ENCODE measurements at regions of chr9 and their contacts with region 1.

Region 1: GRCh38 chr9:71830929-71831328 is 62.6 kb upstream of the CEMIP2 start:
- DNase-seq: no peak
- ATAC-seq: no peak
- H3K4me3 ChIP-seq: no peak overlapping the region
- H3K27ac ChIP-seq: no peak overlapping the region
- H3K4me1 ChIP-seq: no peaks in the 10 kb centered on the region
- H3K27me3 ChIP-seq: no peaks in the 10 kb centered on the region
- CTCF ChIP-seq: no peak
- EP300 ChIP-seq: no peak
- POLR2A ChIP-seq: no peak
- RAD21 ChIP-seq: no peak

Region 2: DNA sequence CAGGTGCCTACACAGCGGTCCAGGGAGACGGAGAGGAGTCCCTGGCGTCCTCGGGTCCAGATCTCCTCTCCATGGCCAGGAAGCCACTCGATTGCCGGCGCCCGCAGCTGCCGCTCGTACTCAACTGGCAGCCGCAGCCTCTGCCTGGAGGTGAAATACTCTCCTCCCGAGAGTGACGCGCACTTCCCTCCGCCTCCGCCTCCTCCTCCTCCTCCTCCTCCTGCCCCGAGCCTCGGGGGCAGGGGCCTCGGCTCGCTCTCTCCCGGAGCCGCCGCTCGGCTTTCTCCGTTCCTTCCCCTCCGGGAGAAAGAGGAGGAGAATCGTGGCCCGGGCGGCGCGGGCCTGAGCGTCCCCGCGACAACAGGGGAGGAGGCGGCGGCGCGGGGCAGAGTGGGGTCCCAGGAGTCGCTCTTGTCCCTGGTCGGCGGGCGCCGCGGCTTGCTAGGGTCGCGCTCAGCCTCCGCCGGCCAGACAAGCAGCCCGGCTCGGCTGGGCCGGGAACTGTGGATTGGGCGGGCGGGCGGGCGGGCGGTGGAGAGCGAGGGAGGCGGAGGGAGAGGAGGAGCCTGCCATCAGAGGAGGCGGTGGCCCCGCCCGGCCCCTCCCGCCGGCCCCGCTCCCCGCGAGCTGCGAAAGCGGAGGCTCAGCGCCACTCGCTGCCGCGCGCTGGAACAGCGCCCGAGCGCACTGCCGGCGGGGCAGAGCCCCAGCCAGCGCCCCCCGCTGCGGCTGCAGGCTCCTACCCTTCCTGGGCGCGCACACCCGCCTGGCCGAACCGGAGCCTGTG is 62.3 kb before region 1 on chr9 and contains the start of gene CEMIP2:
- CTCF ChIA-PET with region 1: no interaction called
- POLR2A ChIA-PET with region 1: no interaction called
- in situ Hi-C with region 1: no loop called
- intact Hi-C with region 1: no loop called
- DNase-seq: peak; percentile 71
- ATAC-seq: peak; percentile 87
- H3K4me3 ChIP-seq: peak within 1 kb of the TSS; percentile 90 to 99 (median 98)
- H3K27ac ChIP-seq: peak within 1 kb of the TSS; percentile 92
- H3K4me1 ChIP-seq: peaks cover 31% of the 10 kb centered on the region
- H3K27me3 ChIP-seq: peaks cover 0 to 12% of the 10 kb centered on the region in 2 experiments; a peak in 1 of 5 replicates
- CTCF ChIP-seq: peak; percentile 73
- EP300 ChIP-seq: no peak; a peak in 1 of 4 replicates
- POLR2A ChIP-seq: peak; percentile 97 to 98
- RAD21 ChIP-seq: peak; percentile 94
- total RNA-seq, gene CEMIP2: 52.7 and 94.3 TPM in 2 replicates

Region 3: GRCh38 chr9:71876106-71876505 is 45.2 kb after region 1 on chr9:
- CTCF ChIA-PET with region 1: no interaction called
- POLR2A ChIA-PET with region 1: no interaction called
- in situ Hi-C with region 1: no loop called
- intact Hi-C with region 1: loop called (anchors 1 kb)
- DNase-seq: peak; percentile 11
- ATAC-seq: peak; percentile 51; the same call in 2 of the 3 replicates
- H3K4me3 ChIP-seq: no peak overlapping the region
- H3K27ac ChIP-seq: no peak overlapping the region
- H3K4me1 ChIP-seq: peaks cover 40% of the 10 kb centered on the region
- H3K27me3 ChIP-seq: no peaks in the 10 kb centered on the region
- CTCF ChIP-seq: no peak
- EP300 ChIP-seq: no peak
- POLR2A ChIP-seq: no peak
- RAD21 ChIP-seq: no peak

Region 4: DNA sequence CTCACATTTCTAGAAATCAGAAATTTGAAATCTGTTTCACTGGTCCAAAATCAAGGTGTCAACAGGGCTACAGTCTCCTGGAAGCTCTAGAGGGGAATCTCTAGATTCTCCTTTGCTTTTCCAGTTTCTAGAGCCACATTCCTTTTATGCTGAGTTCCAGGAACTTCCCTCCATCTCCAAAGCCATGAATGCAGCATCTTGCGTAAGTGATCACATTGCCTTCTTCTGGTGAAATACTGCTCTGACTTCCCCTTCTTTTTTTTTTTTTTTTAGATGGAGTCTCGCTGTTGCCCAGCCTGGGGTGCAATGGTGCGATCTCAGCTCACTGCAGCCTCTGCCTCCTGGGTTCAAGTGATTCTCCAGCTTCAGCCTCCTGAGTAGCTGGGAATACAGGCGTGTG is 342.2 kb after region 1 on chr9:
- CTCF ChIA-PET with region 1: no interaction called
- POLR2A ChIA-PET with region 1: no interaction called
- in situ Hi-C with region 1: no loop called
- intact Hi-C with region 1: no loop called
- DNase-seq: no peak
- ATAC-seq: no peak
- H3K4me3 ChIP-seq: no peak overlapping the region
- H3K27ac ChIP-seq: no peak overlapping the region
- H3K4me1 ChIP-seq: no peaks in the 10 kb centered on the region
- H3K27me3 ChIP-seq: no peaks in the 10 kb centered on the region
- CTCF ChIP-seq: no peak
- EP300 ChIP-seq: no peak
- POLR2A ChIP-seq: no peak
- RAD21 ChIP-seq: no peak

Measured in HepG2 (cell line).